Activated T-helper 2 cell treated with anti-CD3 and anti-CD28 coated beads, Interferon-gamma antibody, Interleukin-2, Interleukin-4, amounts not matched to agents 10 μg/mL and 5 μg/mL and 100 μg/mL, durations not matched to agents 14 hours and 24 hours and 36 hours (primary cell): ENCODE measurements at regions of chr4 and their contacts with region 1.

Region 1: DNA sequence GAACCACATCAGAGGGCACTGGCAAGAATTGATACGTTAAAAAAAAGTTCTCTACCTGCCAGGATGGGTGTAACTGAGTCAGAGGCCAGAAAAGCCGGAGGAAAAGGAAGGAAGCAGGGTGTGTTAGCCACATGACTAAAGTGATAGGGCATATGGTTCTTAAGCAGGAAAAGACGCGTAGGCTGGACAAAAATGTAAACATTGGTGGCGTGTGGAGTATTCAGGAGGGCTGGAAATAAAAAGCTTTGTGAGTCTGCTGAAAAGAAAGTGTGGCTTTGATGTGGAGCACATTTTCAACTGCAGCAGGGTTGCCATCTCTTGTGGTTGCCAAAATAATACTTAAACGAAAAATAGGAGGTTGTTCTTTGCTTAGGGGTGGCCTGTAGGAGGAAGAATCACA is 186.5 kb upstream of the RPL34 start:
- DNase-seq: peak; percentile 47
- H3K4me3 Mint-ChIP-seq: no peak overlapping the region
- H3K27ac Mint-ChIP-seq: peak overlapping the region; percentile 77
- H3K4me1 Mint-ChIP-seq: peaks cover 32% of the 10 kb centered on the region
- H3K27me3 Mint-ChIP-seq: peaks cover 5% of the 10 kb centered on the region

Region 2: GRCh38 chr4:108345862-108346817 is 87.7 kb before region 1 on chr4:
- intact Hi-C with region 1: loop called (anchors 5 kb)
- DNase-seq: no peak
- H3K4me3 Mint-ChIP-seq: no peak overlapping the region
- H3K27ac Mint-ChIP-seq: no peak overlapping the region
- H3K4me1 Mint-ChIP-seq: peaks cover 34% of the 10 kb centered on the region
- H3K27me3 Mint-ChIP-seq: no peaks in the 10 kb centered on the region

Region 3: GRCh38 chr4:108466936-108467902 is 33.4 kb after region 1 on chr4:
- intact Hi-C with region 1: loop called (anchors 2 kb)
- DNase-seq: peak; percentile 23
- H3K4me3 Mint-ChIP-seq: peak overlapping the region; percentile 19
- H3K27ac Mint-ChIP-seq: peak overlapping the region; percentile 64
- H3K4me1 Mint-ChIP-seq: peaks cover 36% of the 10 kb centered on the region
- H3K27me3 Mint-ChIP-seq: no peaks in the 10 kb centered on the region